PC-9 (cell line): ENCODE measurements at regions of chr5 and their contacts with region 1.

Region 1: GRCh38 chr5:55407059-55407684 is 99.4 kb downstream of the MTREX start:
- DNase-seq: peak in 1 of 2 experiments; percentile 14
- H3K4me3 ChIP-seq: no peak overlapping the region
- H3K27ac ChIP-seq: no peak overlapping the region
- H3K4me1 ChIP-seq: 0 out of 2 replicates have a peak, but pooled peaks cover 6% of the 10 kb centered on the region
- H3K27me3 ChIP-seq: no peaks in the 10 kb centered on the region
- CTCF ChIP-seq: peak; percentile 71

Region 2: DNA sequence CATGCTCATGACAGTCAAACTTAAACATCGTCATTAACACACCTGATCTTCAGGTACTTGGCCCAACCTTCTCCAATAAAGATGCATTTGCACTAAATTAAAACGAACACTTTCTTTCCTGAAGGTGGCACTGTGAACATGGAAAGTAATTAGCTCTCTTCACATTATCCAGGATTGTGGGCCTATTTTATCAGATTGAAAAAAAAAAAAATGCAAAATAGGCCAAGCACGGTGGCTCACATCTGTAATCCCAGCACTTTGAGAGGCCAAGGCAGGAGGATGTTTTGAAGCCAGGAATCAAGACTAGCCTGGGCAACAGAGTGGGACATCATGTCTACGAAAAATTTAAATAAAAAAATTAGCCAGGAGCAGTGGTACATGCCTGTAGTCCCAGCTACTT is 219.8 kb before region 1 on chr5:
- CTCF ChIA-PET with region 1: no interaction called
- POLR2A ChIA-PET with region 1: interaction called, 11 read pairs
- intact Hi-C with region 1: no loop called
- DNase-seq: peak in 1 of 2 experiments; percentile 54
- H3K4me3 ChIP-seq: no peak overlapping the region
- H3K27ac ChIP-seq: no peak overlapping the region
- H3K4me1 ChIP-seq: peaks cover 46% of the 10 kb centered on the region
- H3K27me3 ChIP-seq: no peaks in the 10 kb centered on the region
- CTCF ChIP-seq: peak; percentile 68